ENCODE measurements at regions of chr9 and their contacts with region 1.

Region 1: GRCh38 chr9:132560616-132561202 is 21.7 kb upstream of the BARHL1 start:
- DNase-seq: no peak
- H3K4me3 ChIP-seq: no peak overlapping the region
- H3K27ac ChIP-seq: no peak overlapping the region
- H3K4me1 ChIP-seq: no peaks in the 10 kb centered on the region
- H3K27me3 ChIP-seq: peaks cover 4% of the 10 kb centered on the region
- CTCF ChIP-seq: no peak

Region 2: GRCh38 chr9:132502480-132502879 is 58.2 kb before region 1 on chr9:
- CTCF ChIA-PET with region 1: no interaction called
- dilution Hi-C with region 1: loop called (anchors 5 kb)
- in situ Hi-C with region 1: no loop called
- intact Hi-C with region 1: no loop called
- DNase-seq: no peak
- H3K4me3 ChIP-seq: no peak overlapping the region
- H3K27ac ChIP-seq: no peak overlapping the region
- H3K4me1 ChIP-seq: no peaks in the 10 kb centered on the region
- H3K27me3 ChIP-seq: peaks cover 3% of the 10 kb centered on the region
- CTCF ChIP-seq: no peak

Measured in mammary epithelial cell (primary cell).